Calu3 (cell line): ENCODE measurements at regions of chr5 and their contacts with region 1.

Region 1: DNA sequence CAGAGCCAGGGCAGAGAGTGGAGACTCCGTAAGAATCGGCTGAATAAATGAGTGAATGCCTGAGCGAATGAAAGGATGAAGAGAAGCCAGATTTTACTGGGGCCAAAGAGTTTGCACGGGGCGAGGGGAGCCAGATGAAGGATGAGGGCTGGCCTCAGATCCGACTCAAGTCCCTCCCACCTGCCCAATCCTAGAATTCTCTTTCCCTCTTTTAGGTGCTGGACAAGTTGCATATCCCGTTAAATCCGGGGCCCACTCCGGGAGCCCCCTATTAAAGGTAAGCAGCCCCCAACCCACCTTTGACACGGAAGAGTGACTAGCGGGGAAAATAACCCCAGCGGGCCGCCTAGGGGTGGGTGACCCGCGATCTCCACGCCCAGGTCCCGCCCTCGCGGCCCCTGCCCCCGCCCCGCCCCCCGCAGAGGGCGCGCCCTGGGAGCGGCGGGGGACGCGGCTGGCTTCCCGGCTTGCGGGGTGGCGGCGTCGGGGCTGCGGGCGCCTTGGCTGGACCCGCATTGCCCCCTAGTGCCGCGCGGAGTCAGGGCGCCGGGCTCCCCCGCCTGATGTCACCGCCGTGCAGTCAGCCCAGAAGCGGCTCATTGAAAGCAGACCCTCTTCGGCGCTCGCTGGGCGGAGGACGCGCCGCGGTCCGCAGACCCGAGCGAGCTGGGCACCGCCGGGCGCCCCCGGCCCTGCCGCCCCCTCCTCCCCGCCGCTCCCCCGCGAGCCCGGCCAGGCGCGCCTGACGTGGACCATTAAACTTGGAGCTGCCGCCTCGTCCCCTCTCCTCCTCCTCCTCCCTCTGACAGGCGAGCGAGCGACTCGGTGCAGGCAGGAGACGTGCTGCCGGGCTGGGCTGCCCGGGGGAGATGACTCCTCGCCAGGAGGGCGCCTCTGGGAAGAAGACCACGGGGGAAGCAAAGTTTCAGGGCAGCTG is at the start of gene ADRA1B:
- DNase-seq: peak; percentile 91
- H3K4me3 Mint-ChIP-seq: peak within 1 kb of the TSS; percentile 67
- H3K27ac Mint-ChIP-seq: peak within 1 kb of the TSS; percentile 84
- H3K4me1 Mint-ChIP-seq: peaks cover 87% of the 10 kb centered on the region
- H3K27me3 Mint-ChIP-seq: no peaks in the 10 kb centered on the region
- CTCF ChIP-seq: peak; percentile 79
- total RNA-seq, gene ADRA1B: 3.7 and 10.9 TPM in 2 replicates

Region 2: DNA sequence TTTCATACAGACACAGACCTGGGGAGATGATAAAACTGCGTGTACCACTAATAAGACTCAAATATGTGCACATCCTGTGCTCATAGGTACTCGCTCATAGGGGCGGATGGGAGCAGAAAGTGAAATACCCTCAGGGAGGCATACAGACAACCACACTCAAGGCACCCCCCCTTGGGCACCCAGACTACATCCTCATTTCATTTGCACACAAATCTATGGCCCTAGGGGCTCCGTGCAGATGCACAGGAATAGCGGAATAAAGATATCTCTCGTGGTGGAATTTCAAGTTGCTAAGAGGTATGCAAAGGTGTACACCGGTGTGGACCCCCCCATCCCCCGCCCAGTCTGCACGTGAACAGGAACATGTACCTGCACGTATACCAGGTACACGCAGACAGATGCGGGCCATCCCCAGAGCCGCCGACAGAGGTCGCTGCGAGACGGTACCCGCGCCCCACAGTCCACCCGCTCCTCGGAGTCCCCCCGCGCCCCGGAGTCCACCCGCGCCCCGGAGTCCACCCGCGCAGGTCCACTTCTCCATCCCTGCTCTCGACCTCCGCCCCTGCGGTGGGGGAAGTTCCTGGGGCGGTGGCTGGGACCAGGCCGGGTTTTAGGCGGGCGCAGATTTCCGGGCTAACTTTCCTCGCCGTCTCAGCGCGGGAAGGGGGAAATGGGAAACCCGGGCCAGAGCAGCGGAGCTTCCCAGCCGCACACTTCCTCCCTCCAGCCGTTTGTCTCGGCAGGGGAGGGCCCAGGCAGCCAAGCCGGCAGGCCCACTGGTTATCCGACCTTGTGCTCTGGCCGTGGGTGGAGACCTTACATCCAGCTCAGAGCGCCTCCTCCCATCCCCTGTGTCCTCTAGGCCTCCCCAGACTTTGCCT is 584.8 kb before region 1 on chr5:
- CTCF ChIA-PET with region 1: no interaction called
- intact Hi-C with region 1: loop called (anchors 10 kb)
- DNase-seq: peak; percentile 77
- H3K4me3 Mint-ChIP-seq: peak overlapping the region; percentile 76
- H3K27ac Mint-ChIP-seq: no peak overlapping the region
- H3K4me1 Mint-ChIP-seq: peaks cover 11% of the 10 kb centered on the region
- H3K27me3 Mint-ChIP-seq: peaks cover 100% of the 10 kb centered on the region
- CTCF ChIP-seq: peak; percentile 94

Region 3: GRCh38 chr5:159444441-159445082 is 471.6 kb before region 1 on chr5:
- CTCF ChIA-PET with region 1: interaction called, 11 read pairs
- intact Hi-C with region 1: loop called (anchors 1 kb)
- DNase-seq: peak; percentile 24
- H3K4me3 Mint-ChIP-seq: no peak overlapping the region
- H3K27ac Mint-ChIP-seq: no peak overlapping the region
- H3K4me1 Mint-ChIP-seq: peaks cover 21% of the 10 kb centered on the region
- H3K27me3 Mint-ChIP-seq: peaks cover 1% of the 10 kb centered on the region
- CTCF ChIP-seq: no peak

Region 4: GRCh38 chr5:159459951-159460538 is 456.1 kb before region 1 on chr5:
- CTCF ChIA-PET with region 1: no interaction called
- intact Hi-C with region 1: loop called (anchors 5 kb)
- DNase-seq: peak; percentile 30
- H3K4me3 Mint-ChIP-seq: no peak overlapping the region
- H3K27ac Mint-ChIP-seq: peak overlapping the region; percentile 67
- H3K4me1 Mint-ChIP-seq: peaks cover 38% of the 10 kb centered on the region
- H3K27me3 Mint-ChIP-seq: no peaks in the 10 kb centered on the region
- CTCF ChIP-seq: no peak

Region 5: GRCh38 chr5:159515909-159516415 is 400.2 kb before region 1 on chr5:
- CTCF ChIA-PET with region 1: interaction called, 6 read pairs
- intact Hi-C with region 1: loop called (anchors 2 kb)
- DNase-seq: peak; percentile 89
- H3K4me3 Mint-ChIP-seq: no peak overlapping the region
- H3K27ac Mint-ChIP-seq: no peak overlapping the region
- H3K4me1 Mint-ChIP-seq: peaks cover 42% of the 10 kb centered on the region
- H3K27me3 Mint-ChIP-seq: no peaks in the 10 kb centered on the region
- CTCF ChIP-seq: peak; percentile 92

Region 6: DNA sequence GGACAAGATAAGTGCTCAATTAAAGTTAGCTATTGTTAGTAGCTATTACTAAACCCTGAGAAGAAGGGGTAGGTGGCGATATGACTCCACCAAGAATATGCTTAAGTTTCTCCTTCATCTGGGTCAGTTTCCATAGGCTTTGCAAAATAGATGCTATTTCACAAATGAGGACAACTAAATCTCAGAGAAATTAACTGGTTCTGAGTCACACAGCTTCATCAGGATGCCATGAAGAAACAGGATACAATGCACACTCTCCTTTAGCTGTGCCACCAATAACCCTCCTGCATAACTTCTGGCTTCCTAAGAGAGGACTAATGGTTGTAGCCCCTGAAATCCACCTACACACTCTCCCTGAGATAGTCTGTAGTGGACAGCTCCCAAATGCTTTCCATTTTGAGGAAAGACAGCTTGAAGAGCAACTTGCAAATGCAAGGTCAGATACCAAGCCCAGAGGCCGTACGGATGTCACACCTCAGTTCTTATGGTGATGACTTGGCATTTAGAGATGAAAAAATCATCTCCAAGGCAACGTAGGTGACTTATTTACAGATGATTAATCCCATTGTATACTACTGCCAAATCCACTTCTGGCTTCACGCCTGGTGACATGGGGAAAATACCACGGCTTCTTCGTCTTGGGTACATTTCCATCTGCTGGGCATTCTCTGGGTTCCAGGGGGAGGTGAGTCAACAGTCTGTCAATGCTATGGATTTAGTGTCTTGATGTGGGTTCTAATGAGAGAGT is 334.5 kb before region 1 on chr5:
- CTCF ChIA-PET with region 1: interaction called, 3 read pairs
- intact Hi-C with region 1: loop called (anchors 2 kb)
- DNase-seq: peak; percentile 85
- H3K4me3 Mint-ChIP-seq: no peak overlapping the region
- H3K27ac Mint-ChIP-seq: peak overlapping the region; percentile 79
- H3K4me1 Mint-ChIP-seq: peaks cover 37% of the 10 kb centered on the region
- H3K27me3 Mint-ChIP-seq: no peaks in the 10 kb centered on the region
- CTCF ChIP-seq: no peak

Region 7: GRCh38 chr5:159773062-159773924 is 142.9 kb before region 1 on chr5:
- CTCF ChIA-PET with region 1: interaction called, 3 read pairs
- intact Hi-C with region 1: loop called (anchors 2 kb)
- DNase-seq: peak; percentile 77
- H3K4me3 Mint-ChIP-seq: peak overlapping the region; percentile 64
- H3K27ac Mint-ChIP-seq: peak overlapping the region; percentile 67
- H3K4me1 Mint-ChIP-seq: peaks cover 21% of the 10 kb centered on the region
- H3K27me3 Mint-ChIP-seq: peaks cover 3% of the 10 kb centered on the region
- CTCF ChIP-seq: peak; percentile 48